Right cardiac atrium (tissue), 5 donors: ENCODE measurements at regions of chr12 and their contacts with region 1.

Region 1: DNA sequence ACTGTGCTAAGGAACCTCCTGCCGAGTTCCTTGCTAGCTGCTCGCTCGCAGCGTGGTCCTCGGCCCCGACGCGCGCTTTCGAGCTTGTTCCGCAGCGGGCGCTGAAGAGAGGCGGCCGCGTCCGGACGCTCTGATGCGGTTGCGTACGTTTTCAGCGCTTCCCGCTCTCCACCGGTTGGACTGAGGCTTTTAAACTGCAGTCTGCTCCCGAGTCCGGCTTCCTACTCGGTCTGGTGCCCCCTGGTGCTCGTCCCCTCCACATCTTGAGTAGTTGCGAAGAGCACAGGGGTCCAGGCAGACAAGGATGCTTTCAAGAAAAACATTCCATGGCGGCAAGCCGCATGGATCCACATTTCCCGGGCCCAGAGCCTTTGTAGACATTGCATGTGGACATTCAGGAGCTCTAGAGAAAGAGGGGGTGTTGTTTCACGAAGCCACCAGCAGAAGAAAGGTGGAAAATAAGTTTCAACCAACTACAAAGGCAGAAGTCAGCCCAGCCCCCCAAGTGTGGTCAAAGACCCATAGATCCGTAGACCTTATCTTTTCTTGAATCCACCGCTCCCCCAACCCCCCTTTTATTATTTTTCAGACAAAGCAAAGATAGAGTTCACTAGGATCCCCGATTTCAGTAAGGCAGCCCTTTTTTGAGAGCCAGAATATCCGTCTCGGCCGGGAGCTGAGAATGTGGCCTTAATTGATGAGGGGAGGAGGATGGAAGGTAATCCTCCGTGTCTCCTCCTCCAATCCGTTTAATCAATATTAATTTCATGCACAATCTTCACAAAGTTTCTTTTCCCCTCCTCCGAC is 984 bp upstream of the WNK1 start:
- DNase-seq: peak; percentile 94 to 98 (median 96)
- ATAC-seq: peak; percentile 74 to 77
- H3K4me3 ChIP-seq: peak overlapping the region; percentile 65
- H3K27ac ChIP-seq: peak overlapping the region; percentile 82
- H3K4me1 ChIP-seq: no peaks in the 10 kb centered on the region
- H3K27me3 ChIP-seq: no peaks in the 10 kb centered on the region

Region 2: GRCh38 chr12:575948-576612 is 175.3 kb before region 1 on chr12:
- intact Hi-C with region 1: loop called in 3 of 4 experiments (anchors 5 kb)
- DNase-seq: peak; percentile 88 to 95 (median 95)
- ATAC-seq: peak; percentile 74 to 82
- H3K4me3 ChIP-seq: no peak overlapping the region
- H3K27ac ChIP-seq: peak overlapping the region; percentile 75
- H3K4me1 ChIP-seq: peaks cover 12% of the 10 kb centered on the region
- H3K27me3 ChIP-seq: no peaks in the 10 kb centered on the region

Region 3: GRCh38 chr12:642633-643474 is 108.5 kb before region 1 on chr12:
- intact Hi-C with region 1: loop called in 3 of 4 experiments (anchors 5 to 10 kb)
- DNase-seq: peak; percentile 83 to 92 (median 91)
- ATAC-seq: peak; percentile 62 to 74
- H3K4me3 ChIP-seq: peak overlapping the region; percentile 57
- H3K27ac ChIP-seq: peak overlapping the region; percentile 90
- H3K4me1 ChIP-seq: peaks cover 16% of the 10 kb centered on the region
- H3K27me3 ChIP-seq: no peaks in the 10 kb centered on the region

Region 4: GRCh38 chr12:810671-811415 is 59.4 kb after region 1 on chr12:
- intact Hi-C with region 1: loop called (anchors 5 to 10 kb)
- DNase-seq: no peak
- ATAC-seq: peak in 1 of 2 donors; percentile 33
- H3K4me3 ChIP-seq: no peak overlapping the region
- H3K27ac ChIP-seq: no peak overlapping the region
- H3K4me1 ChIP-seq: peaks cover 3% of the 10 kb centered on the region
- H3K27me3 ChIP-seq: no peaks in the 10 kb centered on the region

Region 5: DNA sequence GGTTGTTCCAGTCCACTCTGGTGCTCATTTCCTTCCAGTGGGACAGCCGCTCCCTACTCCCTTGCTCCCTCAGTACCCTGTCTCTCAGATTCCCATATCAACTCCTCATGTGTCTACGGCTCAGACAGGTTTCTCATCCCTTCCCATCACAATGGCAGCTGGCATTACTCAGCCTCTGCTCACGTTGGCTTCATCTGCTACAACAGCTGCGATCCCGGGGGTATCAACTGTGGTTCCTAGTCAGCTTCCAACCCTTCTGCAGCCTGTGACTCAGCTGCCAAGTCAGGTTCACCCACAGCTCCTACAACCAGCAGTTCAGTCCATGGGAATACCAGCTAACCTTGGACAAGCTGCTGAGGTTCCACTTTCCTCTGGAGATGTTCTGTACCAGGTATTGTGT is 128.2 kb after region 1 on chr12:
- intact Hi-C with region 1: no loop called
- DNase-seq: no peak
- ATAC-seq: no peak
- H3K4me3 ChIP-seq: no peak overlapping the region
- H3K27ac ChIP-seq: no peak overlapping the region
- H3K4me1 ChIP-seq: no peaks in the 10 kb centered on the region
- H3K27me3 ChIP-seq: no peaks in the 10 kb centered on the region